ENCODE measurements at regions of chr6 and their contacts with region 1.

Region 1: DNA sequence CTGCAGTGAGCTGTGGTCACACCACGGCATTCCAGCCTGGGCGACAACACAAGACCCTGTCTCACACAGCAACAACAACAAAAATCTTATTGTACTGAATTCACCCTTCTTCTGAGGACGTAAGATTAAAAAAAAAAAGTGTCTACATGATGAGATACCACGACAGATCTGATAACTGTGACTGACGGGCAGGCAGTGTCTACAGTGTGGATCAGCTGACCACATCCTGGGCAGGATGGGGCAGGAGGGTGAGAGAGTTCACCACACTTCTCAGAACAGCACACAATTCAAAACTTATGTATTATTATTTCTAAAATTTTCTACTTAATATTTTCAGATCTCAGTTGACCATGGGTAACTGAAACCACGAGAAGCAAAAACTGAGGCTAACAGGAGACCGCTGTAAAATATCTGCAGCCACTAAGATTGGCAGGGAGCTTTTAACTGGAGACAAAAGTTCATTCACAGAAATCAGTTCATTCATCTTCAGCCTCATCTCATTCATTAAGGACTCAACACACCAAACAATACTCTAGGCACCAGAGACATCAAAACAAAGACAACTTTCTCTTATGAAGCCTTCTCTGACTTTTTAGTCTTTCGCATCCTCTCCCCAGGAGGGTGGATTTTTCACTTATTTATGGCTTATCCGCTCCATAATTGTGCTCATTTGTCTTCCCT is 15.7 kb upstream of the NHSL1 start:
- ATAC-seq: peak in 3 of 8 experiments; percentile 24 to 43 (median 30)
- H3K4me3 ChIP-seq: no peak overlapping the region
- H3K27ac ChIP-seq: peak overlapping the region in 1 of 2 donors; percentile 6
- H3K4me1 ChIP-seq: peaks cover 22 to 23% of the 10 kb centered on the region in 2 donors

Region 2: GRCh38 chr6:138428944-138429598 is 85.9 kb before region 1 on chr6:
- in situ Hi-C with region 1: loop called in 1 of 9 experiments (anchors 5 kb)
- ATAC-seq: peak; percentile 38 to 73 (median 46)
- H3K4me3 ChIP-seq: no peak overlapping the region
- H3K27ac ChIP-seq: no peak overlapping the region
- H3K4me1 ChIP-seq: no peaks in the 10 kb centered on the region

Region 3: GRCh38 chr6:138647006-138647405 is 132.0 kb after region 1 on chr6:
- in situ Hi-C with region 1: no loop called
- ATAC-seq: no peak
- H3K4me3 ChIP-seq: no peak overlapping the region
- H3K27ac ChIP-seq: no peak overlapping the region
- H3K4me1 ChIP-seq: no peaks in the 10 kb centered on the region